Posterior vena cava (tissue), 2 donors: ENCODE measurements at regions of chr6 and their contacts with region 1.

Region 1: GRCh38 chr6:163413345-163414116 is 987 bp upstream of the QKI start:
- DNase-seq: peak; percentile 97

Region 2: GRCh38 chr6:162200945-162201690 is 1212.4 kb before region 1 on chr6:
- intact Hi-C with region 1: loop called in 1 of 2 experiments (anchors 5 kb)
- DNase-seq: no peak

Region 3: GRCh38 chr6:164085091-164086075 is 671.9 kb after region 1 on chr6:
- intact Hi-C with region 1: loop called in 1 of 2 experiments (anchors 10 kb)
- DNase-seq: peak; percentile 95